Heart right ventricle (tissue), 16 donors: ENCODE measurements at regions of chr6 and their contacts with region 1.

Region 1: DNA sequence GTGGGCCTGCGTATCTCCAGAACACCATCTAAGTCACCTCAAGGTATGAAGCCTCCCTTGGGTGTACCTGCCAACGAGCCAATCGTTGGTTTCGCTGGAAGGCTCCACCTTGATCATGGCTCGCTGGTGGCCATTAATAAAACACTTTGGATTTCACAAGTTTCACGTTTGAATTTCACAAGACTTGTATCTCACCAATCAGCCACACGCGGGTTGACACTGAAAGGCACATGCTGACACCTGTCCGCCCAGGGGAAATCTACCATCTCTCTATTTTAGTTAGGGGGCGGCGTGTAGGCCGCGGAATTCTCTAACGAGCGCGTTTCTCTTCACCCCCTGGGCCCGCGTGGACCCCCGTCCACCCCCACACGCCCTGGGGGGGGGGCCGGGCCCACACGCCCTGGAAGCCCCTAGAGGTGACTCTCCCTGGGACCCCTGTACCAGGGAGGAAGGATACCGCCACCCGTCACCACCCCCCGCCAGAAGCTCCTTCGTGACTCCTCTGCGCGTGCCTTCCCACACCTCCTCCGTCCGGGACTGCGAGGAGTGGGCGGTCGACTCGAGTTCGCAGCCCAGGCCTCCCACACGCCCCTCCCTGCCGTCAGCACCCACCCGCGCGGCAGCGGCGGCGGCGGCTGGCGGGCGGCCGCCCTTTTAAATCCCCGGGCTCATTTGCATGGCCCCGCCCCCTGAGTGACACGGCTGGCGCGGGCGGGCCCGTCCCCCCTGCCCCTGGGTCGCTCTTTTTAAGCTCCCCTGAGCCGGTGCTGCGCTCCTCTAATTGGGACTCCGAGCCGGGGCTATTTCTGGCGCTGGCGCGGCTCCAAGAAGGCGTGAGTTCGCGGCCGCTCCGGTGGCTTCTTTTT is at the start of gene HMGA1:
- DNase-seq: peak; percentile 88 to 89
- ATAC-seq: peak; percentile 90 to 95 (median 94)
- H3K4me3 ChIP-seq: peak within 1 kb of the TSS; percentile 71 to 85 (median 78)
- H3K27ac ChIP-seq: peak within 1 kb of the TSS in 9 of 10 donors; percentile 76 to 94 (median 85)
- H3K4me1 ChIP-seq: peaks cover 6 to 26% (median 14%) of the 10 kb centered on the region in 9 donors
- H3K27me3 ChIP-seq: no peaks in the 10 kb centered on the region
- CTCF ChIP-seq: no peak
- total RNA-seq, gene HMGA1: 33.9 to 54.9 (median 41.3) TPM

Region 2: DNA sequence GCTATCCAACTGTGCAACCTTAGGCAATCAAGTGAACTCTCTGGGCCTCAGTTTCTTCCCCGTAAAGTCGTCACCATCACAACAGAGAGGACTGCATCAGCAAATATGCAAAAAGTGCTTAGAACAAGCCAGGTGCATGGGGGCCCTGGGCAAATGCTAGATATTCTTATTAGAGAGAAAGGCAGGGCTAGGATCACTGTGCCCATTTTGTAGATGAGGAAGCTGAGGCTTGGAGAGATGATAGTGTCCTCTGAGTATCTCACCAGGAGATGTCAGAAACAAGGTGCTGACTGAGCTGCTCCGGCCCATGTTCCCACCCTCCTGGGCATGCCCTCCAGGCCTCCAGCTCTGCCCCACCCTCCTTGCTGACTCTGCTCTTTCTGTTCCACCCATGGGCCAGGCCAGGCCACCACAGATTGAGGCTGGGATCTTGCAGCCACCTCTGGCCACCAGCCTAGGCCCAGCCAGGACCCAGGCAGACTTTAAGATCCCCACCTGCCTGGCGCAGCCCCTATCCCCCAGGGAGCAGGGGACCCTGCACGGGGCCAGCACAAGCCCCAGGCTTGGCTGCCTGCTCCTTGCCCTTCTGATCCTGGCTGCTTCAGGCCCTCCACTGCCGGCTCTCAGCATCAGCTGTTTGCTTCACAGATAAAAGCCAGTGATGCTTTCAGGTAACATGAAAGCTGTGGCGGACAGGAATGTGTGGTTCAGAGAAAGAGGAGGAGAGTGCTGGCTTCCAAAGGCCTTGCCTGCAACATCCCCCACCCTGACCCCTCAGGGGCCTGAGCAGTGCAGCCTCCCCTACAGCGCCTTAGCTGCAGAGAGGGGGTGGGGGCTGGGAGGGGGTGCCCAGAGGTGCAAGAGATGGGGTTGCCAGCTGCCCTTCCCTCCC is 138.1 kb before region 1 on chr6:
- intact Hi-C with region 1: no loop called
- DNase-seq: no peak
- ATAC-seq: no peak
- H3K4me3 ChIP-seq: no peak overlapping the region
- H3K27ac ChIP-seq: no peak overlapping the region
- H3K4me1 ChIP-seq: no peaks in the 10 kb centered on the region
- H3K27me3 ChIP-seq: peaks cover 5 to 64% (median 31%) of the 10 kb centered on the region in 7 donors
- CTCF ChIP-seq: no peak

Region 3: DNA sequence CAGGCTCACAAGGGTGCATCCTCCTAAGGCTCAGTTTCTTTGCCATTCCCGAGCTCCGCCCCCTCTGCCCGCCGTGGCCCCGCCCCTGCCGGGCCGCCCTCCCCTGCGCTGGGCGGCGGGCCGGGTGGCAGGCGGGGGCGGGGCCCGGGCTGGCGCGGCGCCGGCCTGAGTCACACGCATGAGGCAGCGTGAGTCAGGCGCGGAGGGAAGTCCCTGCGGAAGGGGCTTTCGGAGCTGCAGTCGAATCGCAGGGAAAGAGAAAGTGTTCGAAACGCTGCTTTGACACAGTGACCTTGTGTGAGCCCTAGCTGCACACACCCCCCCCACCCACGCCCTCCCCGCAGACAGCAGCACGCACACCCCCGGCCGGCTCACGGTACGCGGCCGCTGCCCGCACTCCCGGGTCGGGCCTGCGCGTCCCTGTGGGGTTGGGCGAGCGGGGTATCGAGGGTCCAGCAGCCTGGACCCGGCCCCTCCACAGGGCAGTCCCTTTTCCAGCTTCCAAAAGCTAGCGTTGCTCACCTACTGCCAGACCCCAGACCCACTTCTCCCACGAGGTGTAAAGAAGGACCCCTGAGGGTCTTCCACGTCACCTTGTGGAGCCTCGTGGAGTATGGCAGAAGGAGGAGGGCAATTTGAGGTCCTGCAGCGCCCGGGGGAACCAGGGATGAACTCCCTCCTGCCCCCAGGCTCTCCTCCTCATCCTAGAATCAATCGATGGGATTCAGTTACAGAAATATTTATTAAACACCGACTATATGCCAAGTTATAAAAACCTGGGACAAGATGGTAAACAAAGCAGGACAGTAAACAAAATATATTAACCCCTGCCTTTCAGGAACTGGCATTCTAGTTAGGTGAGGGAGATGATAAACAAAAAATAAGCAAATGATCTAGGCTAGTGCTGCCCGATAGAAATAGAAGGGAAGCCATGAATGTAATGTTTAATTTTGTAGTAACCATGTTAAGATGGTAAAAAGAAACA is 12.1 kb before region 1 on chr6:
- intact Hi-C with region 1: loop called in 1 of 10 experiments (anchors 1 kb)
- DNase-seq: peak; percentile 91 to 93
- ATAC-seq: peak; percentile 97 to 99 (median 98)
- H3K4me3 ChIP-seq: peak overlapping the region; percentile 35 to 91 (median 70)
- H3K27ac ChIP-seq: peak overlapping the region; percentile 48 to 94 (median 90)
- H3K4me1 ChIP-seq: peaks cover 0 to 27% (median 13%) of the 10 kb centered on the region in 9 donors
- H3K27me3 ChIP-seq: no peaks in the 10 kb centered on the region
- CTCF ChIP-seq: no peak

Region 4: GRCh38 chr6:34295721-34296120 is 59.4 kb after region 1 on chr6:
- intact Hi-C with region 1: no loop called
- DNase-seq: no peak
- ATAC-seq: no peak
- H3K4me3 ChIP-seq: no peak overlapping the region
- H3K27ac ChIP-seq: peak overlapping the region in 5 of 10 donors; percentile 18 to 55 (median 40)
- H3K4me1 ChIP-seq: peaks cover 2 to 57% (median 41%) of the 10 kb centered on the region in 9 donors
- H3K27me3 ChIP-seq: no peaks in the 10 kb centered on the region
- CTCF ChIP-seq: no peak